ENCODE measurements at regions of chr10 and their contacts with region 1.

Region 1: GRCh38 chr10:104291439-104291951 is 22.5 kb downstream of the GSTO2 start:
- DNase-seq: peak; percentile 94
- ATAC-seq: peak; percentile 99
- H3K4me3 Mint-ChIP-seq: no peak overlapping the region
- H3K27ac Mint-ChIP-seq: no peak overlapping the region
- H3K4me1 Mint-ChIP-seq: peaks cover 19% of the 10 kb centered on the region
- H3K27me3 Mint-ChIP-seq: peaks cover 15% of the 10 kb centered on the region

Region 2: GRCh38 chr10:104016661-104017060 is 274.8 kb before region 1 on chr10:
- CTCF ChIA-PET with region 1: no interaction called
- POLR2A ChIA-PET with region 1: no interaction called
- intact Hi-C with region 1: no loop called
- DNase-seq: no peak
- ATAC-seq: no peak
- H3K4me3 Mint-ChIP-seq: no peak overlapping the region
- H3K27ac Mint-ChIP-seq: no peak overlapping the region
- H3K4me1 Mint-ChIP-seq: peaks cover 21% of the 10 kb centered on the region
- H3K27me3 Mint-ChIP-seq: no peaks in the 10 kb centered on the region

Region 3: DNA sequence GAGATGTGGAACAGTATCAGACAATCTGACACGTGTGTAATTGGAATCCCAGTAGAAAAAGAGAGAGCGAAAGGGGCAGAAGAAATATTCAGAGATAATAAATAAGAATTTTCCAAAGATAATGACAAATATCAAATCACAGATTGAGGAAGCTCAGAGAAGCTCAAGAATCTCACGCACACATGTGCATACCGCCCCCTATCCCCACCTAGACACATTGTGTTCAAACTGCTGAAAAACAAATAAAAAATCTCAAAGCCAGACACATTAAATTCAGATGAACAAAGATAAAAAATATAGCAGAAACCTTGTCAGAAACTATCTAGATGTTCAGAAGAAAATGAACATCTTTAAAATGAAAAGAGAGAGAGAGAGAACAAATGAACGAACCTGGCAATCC is 152.3 kb before region 1 on chr10:
- CTCF ChIA-PET with region 1: no interaction called
- POLR2A ChIA-PET with region 1: no interaction called
- intact Hi-C with region 1: no loop called
- DNase-seq: peak; percentile 16
- ATAC-seq: no peak
- H3K4me3 Mint-ChIP-seq: no peak overlapping the region
- H3K27ac Mint-ChIP-seq: no peak overlapping the region
- H3K4me1 Mint-ChIP-seq: no peaks in the 10 kb centered on the region
- H3K27me3 Mint-ChIP-seq: peaks cover 8% of the 10 kb centered on the region

Region 4: DNA sequence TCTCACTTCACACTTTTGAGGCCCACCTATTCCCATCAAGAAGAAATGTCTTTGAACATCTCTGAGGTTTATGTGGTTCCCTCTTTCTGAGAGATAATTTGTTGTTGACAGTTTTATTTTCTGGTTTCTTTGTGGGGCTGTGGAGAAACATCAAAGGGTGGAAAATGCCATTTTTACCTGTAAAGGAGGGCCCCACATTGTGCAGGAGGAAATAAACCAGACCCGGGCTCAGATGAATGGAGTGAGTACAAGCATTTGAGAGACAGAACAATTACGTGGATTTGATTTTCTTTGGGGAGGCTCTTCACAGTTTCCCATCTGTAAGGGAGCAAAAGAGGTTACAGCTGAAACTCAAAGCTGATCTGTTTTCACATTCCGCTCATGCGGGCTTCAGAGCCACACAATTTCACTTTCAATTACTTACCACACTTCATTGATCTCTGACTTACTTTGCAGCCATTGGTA is 17.0 kb after region 1 on chr10:
- CTCF ChIA-PET with region 1: interaction called, 142 read pairs
- POLR2A ChIA-PET with region 1: interaction called, 4 read pairs
- intact Hi-C with region 1: loop called in 1 of 2 experiments (anchors 1 kb)
- DNase-seq: peak; percentile 61
- ATAC-seq: peak; percentile 80
- H3K4me3 Mint-ChIP-seq: no peak overlapping the region
- H3K27ac Mint-ChIP-seq: peak overlapping the region; percentile 76
- H3K4me1 Mint-ChIP-seq: peaks cover 62% of the 10 kb centered on the region
- H3K27me3 Mint-ChIP-seq: no peaks in the 10 kb centered on the region

Region 5: DNA sequence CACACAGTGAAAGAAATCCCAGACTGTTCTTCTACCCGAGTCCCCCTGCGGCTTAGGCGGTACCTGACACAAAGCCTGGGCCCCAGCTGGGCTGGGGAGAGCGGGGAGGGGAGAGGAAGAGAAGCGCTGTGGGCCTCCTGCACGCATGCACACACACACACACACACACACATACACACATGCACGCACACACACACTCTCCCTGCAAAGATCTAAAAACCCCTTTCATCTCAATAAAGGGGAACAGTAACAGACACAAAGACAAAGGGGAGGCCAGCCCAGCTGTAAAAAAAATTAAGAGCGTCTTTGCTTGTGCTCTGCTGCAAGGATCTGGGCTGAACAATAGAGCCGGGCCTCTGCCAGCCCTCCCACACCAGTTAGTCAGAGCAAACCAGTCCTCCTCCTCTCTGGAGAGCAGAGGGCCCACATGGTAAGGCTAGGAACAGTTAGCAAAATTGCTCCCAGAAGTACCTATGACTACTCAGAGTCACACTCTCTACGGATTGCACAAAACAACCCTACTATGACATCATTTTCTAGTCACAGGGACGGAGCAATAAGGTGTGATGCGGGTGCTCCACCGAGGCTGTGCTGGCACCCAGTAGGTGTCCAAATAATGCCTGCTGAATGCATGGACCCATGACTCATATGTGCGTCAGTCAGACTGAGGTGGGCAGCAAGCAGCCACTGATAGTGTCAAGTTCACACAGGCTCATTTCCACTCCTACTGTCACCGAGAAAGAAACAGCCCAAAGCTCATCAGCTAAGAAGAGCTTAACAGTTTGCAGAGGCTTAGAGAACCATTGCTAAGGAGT is 37.6 kb after region 1 on chr10:
- CTCF ChIA-PET with region 1: interaction called, 64 read pairs
- POLR2A ChIA-PET with region 1: no interaction called
- intact Hi-C with region 1: no loop called
- DNase-seq: peak; percentile 89
- ATAC-seq: peak; percentile 92
- H3K4me3 Mint-ChIP-seq: peak overlapping the region; percentile 75
- H3K27ac Mint-ChIP-seq: peak overlapping the region; percentile 89
- H3K4me1 Mint-ChIP-seq: peaks cover 98% of the 10 kb centered on the region
- H3K27me3 Mint-ChIP-seq: no peaks in the 10 kb centered on the region

Region 6: DNA sequence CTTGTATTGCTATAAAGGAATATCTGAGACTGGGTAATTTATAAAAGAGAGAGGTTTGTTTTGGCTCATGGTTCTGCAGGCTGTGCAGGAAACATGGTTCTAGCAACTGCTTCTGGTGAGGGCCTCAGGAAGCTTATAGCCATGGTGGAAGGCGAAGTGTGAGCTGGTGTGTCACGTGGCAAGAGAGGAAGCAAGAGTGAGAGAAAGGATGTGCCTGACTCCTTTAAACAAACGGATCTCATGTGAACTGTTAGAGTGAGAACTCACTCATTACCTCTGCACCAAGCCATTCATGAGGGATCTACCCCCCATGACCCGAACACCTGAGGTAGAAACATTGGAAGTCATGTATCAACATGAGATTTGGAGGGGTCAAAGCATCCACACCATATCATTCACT is 54.4 kb after region 1 on chr10:
- CTCF ChIA-PET with region 1: interaction called, 95 read pairs
- POLR2A ChIA-PET with region 1: no interaction called
- intact Hi-C with region 1: loop called (anchors 1 kb)
- DNase-seq: no peak
- ATAC-seq: peak; percentile 35
- H3K4me3 Mint-ChIP-seq: no peak overlapping the region
- H3K27ac Mint-ChIP-seq: no peak overlapping the region
- H3K4me1 Mint-ChIP-seq: peaks cover 12% of the 10 kb centered on the region
- H3K27me3 Mint-ChIP-seq: no peaks in the 10 kb centered on the region